ENCODE measurements at regions of chr22 and their contacts with region 1.

Region 1: DNA sequence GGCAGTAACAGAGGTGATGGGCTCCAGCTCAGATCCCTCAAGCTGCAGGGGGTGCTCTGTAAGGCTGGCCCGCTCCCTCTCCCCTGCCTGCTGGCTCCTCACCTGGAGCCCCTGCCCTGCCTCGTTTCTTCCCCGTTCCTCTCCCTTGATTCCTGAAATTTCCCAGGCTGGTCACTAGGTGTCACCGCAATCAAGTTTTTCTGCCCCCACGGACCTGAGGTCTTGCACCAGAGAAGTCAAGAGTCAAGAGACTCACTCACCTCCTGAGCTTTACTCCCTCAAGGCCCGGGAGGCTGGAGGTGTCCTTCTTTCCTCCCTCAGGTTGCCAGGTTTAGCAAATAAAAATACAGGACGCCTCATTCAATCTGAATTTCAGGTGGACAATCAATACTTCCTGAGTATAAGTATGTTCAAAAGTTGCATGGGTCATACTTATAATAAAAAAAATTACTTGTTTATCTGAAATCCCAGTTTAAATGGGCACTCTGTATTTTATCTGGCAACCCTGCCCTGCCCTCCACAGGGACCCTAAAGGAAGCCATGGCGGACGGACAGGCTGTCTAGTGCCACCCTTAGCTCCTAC is 69.2 kb downstream of the SCUBE1 start:
- DNase-seq: peak; percentile 57
- H3K4me3 ChIP-seq: no peak overlapping the region
- H3K27ac ChIP-seq: no peak overlapping the region
- H3K4me1 ChIP-seq: no peaks in the 10 kb centered on the region
- H3K27me3 ChIP-seq: no peaks in the 10 kb centered on the region
- CTCF ChIP-seq: peak; percentile 61 to 63
- POLR2A ChIP-seq: no peak

Region 2: DNA sequence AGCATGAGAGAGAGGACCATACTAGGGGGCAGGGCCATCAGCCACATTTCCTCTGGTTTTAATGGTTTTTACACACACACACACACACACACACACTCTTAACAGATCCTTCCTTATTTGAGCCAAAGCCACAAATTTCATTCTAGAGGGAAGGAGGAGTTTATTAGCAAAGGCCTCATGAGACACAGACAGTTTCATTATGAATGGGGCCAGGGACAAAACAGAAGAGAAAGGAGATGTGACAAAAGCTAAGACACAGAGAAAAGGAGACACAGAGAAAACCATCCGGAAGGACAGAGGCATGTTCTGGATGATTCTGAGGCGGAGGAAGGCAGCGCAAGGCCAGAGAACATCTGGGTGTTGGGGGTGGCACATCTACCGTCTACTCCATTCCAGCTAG is 384.7 kb before region 1 on chr22:
- CTCF ChIA-PET with region 1: no interaction called
- POLR2A ChIA-PET with region 1: no interaction called
- dilution Hi-C with region 1: no loop called
- intact Hi-C with region 1: no loop called
- DNase-seq: no peak
- H3K4me3 ChIP-seq: no peak overlapping the region
- H3K27ac ChIP-seq: no peak overlapping the region
- H3K4me1 ChIP-seq: no peaks in the 10 kb centered on the region
- H3K27me3 ChIP-seq: no peaks in the 10 kb centered on the region
- CTCF ChIP-seq: no peak
- POLR2A ChIP-seq: no peak

Region 3: GRCh38 chr22:43230971-43231723 is 42.8 kb before region 1 on chr22:
- CTCF ChIA-PET with region 1: interaction called, 19 read pairs
- POLR2A ChIA-PET with region 1: no interaction called
- dilution Hi-C with region 1: no loop called
- intact Hi-C with region 1: loop called (anchors 1 kb)
- DNase-seq: peak; percentile 50
- H3K4me3 ChIP-seq: no peak overlapping the region
- H3K27ac ChIP-seq: no peak overlapping the region
- H3K4me1 ChIP-seq: no peaks in the 10 kb centered on the region
- H3K27me3 ChIP-seq: no peaks in the 10 kb centered on the region
- CTCF ChIP-seq: peak; percentile 83 to 91
- POLR2A ChIP-seq: no peak

Region 4: GRCh38 chr22:43263645-43264514 is 10.1 kb before region 1 on chr22:
- CTCF ChIA-PET with region 1: interaction called, 26 read pairs
- POLR2A ChIA-PET with region 1: no interaction called
- dilution Hi-C with region 1: no loop called
- intact Hi-C with region 1: loop called (anchors 1 kb)
- DNase-seq: peak; percentile 97
- H3K4me3 ChIP-seq: peak overlapping the region in 1 of 3 experiments; percentile 30
- H3K27ac ChIP-seq: peak overlapping the region; percentile 93
- H3K4me1 ChIP-seq: peaks cover 23% of the 10 kb centered on the region
- H3K27me3 ChIP-seq: no peaks in the 10 kb centered on the region
- CTCF ChIP-seq: no peak
- POLR2A ChIP-seq: no peak

Region 5: GRCh38 chr22:43293655-43294392 is 19.8 kb after region 1 on chr22:
- CTCF ChIA-PET with region 1: interaction called, 12 read pairs
- POLR2A ChIA-PET with region 1: no interaction called
- dilution Hi-C with region 1: no loop called
- intact Hi-C with region 1: loop called (anchors 1 kb)
- DNase-seq: peak; percentile 25
- H3K4me3 ChIP-seq: no peak overlapping the region
- H3K27ac ChIP-seq: no peak overlapping the region
- H3K4me1 ChIP-seq: no peaks in the 10 kb centered on the region
- H3K27me3 ChIP-seq: no peaks in the 10 kb centered on the region
- CTCF ChIP-seq: no peak
- POLR2A ChIP-seq: no peak

Region 6: DNA sequence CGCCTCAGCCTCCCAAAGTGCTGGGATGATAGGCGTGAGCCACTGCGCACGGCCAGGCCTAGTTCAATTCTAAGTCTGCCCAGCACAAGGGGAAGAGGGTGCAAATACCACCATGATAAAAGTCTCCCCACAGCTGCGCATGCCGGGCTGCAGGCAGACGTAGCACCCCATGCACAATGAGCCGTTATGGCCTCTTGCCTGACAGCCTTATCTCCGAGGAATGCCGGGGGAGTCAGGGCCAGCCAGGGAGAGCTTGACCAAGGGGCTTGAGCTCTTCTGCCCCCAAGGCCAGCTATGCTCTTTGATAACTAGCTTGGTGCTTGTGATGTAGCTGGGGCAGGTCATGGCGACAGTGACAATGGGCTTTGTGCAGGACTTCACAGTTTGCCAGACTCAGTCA is 82.9 kb after region 1 on chr22:
- CTCF ChIA-PET with region 1: interaction called, 13 read pairs
- POLR2A ChIA-PET with region 1: no interaction called
- dilution Hi-C with region 1: no loop called
- intact Hi-C with region 1: no loop called
- DNase-seq: no peak
- H3K4me3 ChIP-seq: no peak overlapping the region
- H3K27ac ChIP-seq: no peak overlapping the region
- H3K4me1 ChIP-seq: no peaks in the 10 kb centered on the region
- H3K27me3 ChIP-seq: no peaks in the 10 kb centered on the region
- CTCF ChIP-seq: no peak
- POLR2A ChIP-seq: no peak

Region 7: DNA sequence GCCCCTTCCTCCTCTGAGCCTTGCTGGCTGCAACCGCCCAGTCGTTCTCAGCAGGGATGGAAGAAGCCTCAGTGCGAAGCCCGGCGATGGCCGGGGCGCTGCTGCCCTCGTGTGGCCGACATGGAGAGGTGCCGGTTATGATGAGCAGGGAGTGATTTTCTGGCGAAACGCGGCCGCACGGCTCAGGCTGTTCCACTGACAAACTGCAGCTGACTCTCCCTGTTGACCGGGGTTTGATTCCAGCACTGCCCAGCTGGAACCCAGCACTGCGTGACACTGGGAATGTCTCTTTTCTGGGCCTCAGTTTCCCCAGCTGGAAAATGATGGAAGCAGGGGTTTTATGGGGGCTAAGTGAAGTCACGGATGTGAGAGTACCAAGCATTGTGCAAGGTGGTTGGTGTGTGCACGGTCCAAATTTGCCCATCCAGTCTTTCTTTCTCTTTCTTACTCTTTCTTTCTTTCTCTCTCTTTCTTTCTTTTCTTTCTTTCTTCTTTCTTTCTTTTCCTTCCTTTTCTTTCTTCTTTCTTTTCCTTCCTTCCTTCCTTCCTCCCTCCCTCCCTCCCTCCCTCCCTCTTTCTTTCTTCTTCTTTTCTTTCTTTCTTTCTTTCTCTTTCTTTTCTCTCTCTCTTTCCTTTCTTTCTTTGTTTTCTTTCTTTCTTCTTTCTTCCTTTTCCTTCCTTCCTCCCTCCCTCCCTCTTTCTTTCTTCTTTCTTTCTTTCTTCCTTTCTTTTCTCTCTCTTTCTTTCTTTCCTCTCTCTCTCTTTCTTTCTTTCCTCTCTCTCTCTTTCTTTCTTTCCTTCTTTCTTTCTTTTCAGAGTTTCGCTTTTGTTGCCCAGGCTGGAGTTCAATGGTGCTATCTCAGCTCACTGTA is 112.0 kb after region 1 on chr22:
- CTCF ChIA-PET with region 1: interaction called, 67 read pairs
- POLR2A ChIA-PET with region 1: no interaction called
- dilution Hi-C with region 1: no loop called
- intact Hi-C with region 1: loop called (anchors 1 kb)
- DNase-seq: peak; percentile 70
- H3K4me3 ChIP-seq: no peak overlapping the region
- H3K27ac ChIP-seq: no peak overlapping the region
- H3K4me1 ChIP-seq: no peaks in the 10 kb centered on the region
- H3K27me3 ChIP-seq: peaks cover 4 to 10% of the 10 kb centered on the region in 2 experiments
- CTCF ChIP-seq: peak; percentile 91 to 95
- POLR2A ChIP-seq: no peak

Region 8: DNA sequence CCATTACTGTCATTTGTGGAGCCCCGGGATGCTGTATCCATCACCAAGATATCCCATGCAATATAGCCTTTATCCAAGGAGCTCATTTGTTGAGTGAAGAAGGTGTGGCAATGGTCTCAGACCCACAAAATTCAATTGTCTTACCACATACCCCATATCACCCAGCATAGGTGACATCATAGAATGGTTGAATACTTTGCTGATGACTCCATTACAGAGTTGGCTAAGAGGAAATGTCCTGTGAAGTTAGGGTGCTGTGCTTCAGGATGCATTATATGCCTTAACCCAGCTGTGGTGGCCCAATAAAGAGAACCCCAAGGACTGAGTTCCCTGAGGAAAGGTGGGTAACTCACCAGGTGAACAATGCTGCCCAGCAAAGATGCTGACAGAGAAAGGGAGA is 424.4 kb after region 1 on chr22:
- CTCF ChIA-PET with region 1: no interaction called
- POLR2A ChIA-PET with region 1: no interaction called
- dilution Hi-C with region 1: no loop called
- intact Hi-C with region 1: no loop called
- DNase-seq: no peak
- H3K4me3 ChIP-seq: no peak overlapping the region
- H3K27ac ChIP-seq: no peak overlapping the region
- H3K4me1 ChIP-seq: no peaks in the 10 kb centered on the region
- H3K27me3 ChIP-seq: no peaks in the 10 kb centered on the region
- CTCF ChIP-seq: no peak
- POLR2A ChIP-seq: no peak

Measured in endothelial cell of umbilical vein (primary cell).